ENCODE measurements at regions of chr19 and their contacts with region 1.

Region 1: GRCh38 chr19:6021878-6022569 is 44.1 kb upstream of the RANBP3 start:
- DNase-seq: peak; percentile 93
- ATAC-seq: peak; percentile 89
- H3K4me3 Mint-ChIP-seq: no peak overlapping the region
- H3K27ac Mint-ChIP-seq: no peak overlapping the region
- H3K4me1 Mint-ChIP-seq: 0 out of 2 replicates have a peak, but pooled peaks cover 6% of the 10 kb centered on the region
- H3K27me3 Mint-ChIP-seq: peaks cover 12% of the 10 kb centered on the region
- CTCF ChIP-seq: peak; percentile 80

Region 2: DNA sequence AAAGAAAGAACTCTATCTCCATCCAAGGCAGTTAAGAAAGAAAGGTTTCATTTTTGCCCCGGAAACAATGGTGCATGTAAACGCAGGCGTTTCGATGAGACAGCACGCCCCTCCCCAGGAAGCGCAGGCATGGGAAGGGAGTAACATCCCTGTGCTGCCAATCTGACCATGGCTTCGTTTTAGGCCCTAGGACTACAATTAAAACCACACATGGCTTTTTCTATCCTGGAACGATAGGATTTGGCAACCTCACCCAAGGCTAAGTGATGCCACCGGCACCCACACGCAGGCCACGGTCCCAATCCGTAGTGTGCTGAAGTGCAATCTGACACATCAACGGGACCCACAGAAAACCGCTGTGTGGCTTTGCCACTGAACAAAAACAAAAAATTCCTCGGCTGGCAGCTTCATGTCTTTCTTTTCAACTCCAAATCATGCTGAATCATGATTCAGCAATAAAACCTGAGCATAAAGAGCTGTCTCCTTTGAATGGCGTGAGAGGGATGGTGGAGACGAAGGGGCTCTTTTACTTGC is 68.3 kb before region 1 on chr19:
- CTCF ChIA-PET with region 1: interaction called, 22 read pairs
- POLR2A ChIA-PET with region 1: no interaction called
- DNase-seq: no peak
- ATAC-seq: no peak
- H3K4me3 Mint-ChIP-seq: peak overlapping the region; percentile 22; the same call in 1 of the 2 replicates
- H3K27ac Mint-ChIP-seq: peak overlapping the region; percentile 88
- H3K4me1 Mint-ChIP-seq: peaks cover 95% of the 10 kb centered on the region
- H3K27me3 Mint-ChIP-seq: no peaks in the 10 kb centered on the region; the same call in 1 of the 2 replicates
- CTCF ChIP-seq: no peak

Region 3: DNA sequence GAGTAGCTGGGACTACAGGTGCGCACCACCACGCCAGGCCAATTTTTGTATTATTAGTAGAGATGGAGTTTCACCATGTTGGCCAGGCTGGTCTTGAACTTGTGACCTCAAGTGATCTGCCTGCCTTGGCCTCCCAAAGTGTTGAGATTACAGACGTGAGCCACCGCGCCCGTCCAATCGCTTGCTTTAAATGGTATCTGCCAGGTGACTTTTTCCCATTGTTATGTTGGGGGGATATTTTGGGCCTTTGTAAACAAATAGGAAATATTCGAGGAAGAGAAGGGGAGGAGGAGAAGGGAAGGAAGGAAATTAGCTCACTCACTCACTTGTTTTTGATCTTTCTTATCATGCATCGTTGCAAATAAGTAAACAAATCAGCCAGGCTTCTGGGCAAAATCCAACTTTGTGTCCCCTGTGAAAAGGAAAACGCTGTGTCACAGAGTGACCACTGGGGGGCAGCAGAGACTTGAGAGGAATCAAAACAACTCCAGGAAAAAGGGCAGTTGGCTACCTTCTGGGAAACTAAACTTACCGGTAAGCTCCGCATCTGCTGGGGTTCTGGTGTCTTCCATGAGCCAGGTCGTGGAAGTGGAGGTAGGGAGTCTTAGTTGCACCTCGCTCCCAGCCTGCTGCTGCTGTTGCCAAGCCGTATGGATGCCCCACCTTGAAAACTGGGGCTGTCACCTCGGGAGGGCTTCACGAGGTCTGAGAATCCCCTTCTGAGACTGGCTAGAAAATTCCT is 34.8 kb before region 1 on chr19:
- CTCF ChIA-PET with region 1: interaction called, 245 read pairs
- POLR2A ChIA-PET with region 1: no interaction called
- DNase-seq: peak; percentile 84
- ATAC-seq: peak; percentile 46
- H3K4me3 Mint-ChIP-seq: no peak overlapping the region
- H3K27ac Mint-ChIP-seq: peak overlapping the region; percentile 46; the same call in 1 of the 2 replicates
- H3K4me1 Mint-ChIP-seq: peaks cover 12% of the 10 kb centered on the region
- H3K27me3 Mint-ChIP-seq: peaks cover 4% of the 10 kb centered on the region
- CTCF ChIP-seq: peak; percentile 90

Region 4: GRCh38 chr19:6034512-6034911 is 12.5 kb after region 1 on chr19:
- CTCF ChIA-PET with region 1: interaction called, 21 read pairs
- POLR2A ChIA-PET with region 1: no interaction called
- DNase-seq: no peak
- ATAC-seq: no peak
- H3K4me3 Mint-ChIP-seq: no peak overlapping the region
- H3K27ac Mint-ChIP-seq: no peak overlapping the region
- H3K4me1 Mint-ChIP-seq: no peaks in the 10 kb centered on the region
- H3K27me3 Mint-ChIP-seq: peaks cover 3% of the 10 kb centered on the region
- CTCF ChIP-seq: no peak

Region 5: DNA sequence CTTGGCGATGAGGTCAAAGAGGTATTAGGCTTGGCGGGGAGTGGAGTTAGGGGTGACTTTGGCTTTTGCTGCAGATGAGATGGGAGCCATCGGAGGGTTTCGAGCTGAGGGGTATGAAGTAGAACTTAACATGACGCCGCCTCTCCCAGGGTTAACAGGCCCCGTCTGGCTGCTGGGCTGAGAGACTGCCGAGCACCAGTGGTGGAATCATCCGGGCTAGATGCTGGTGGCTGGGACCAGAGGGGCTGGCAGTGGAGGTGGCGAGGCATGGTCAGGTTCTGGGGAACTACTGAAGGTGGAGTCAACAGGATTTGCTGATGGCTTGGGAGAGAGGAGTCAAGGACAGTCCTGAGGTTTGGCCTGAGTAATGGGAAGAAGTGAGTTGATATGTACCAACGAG is 83.4 kb after region 1 on chr19:
- CTCF ChIA-PET with region 1: no interaction called
- POLR2A ChIA-PET with region 1: no interaction called
- DNase-seq: no peak
- ATAC-seq: no peak
- H3K4me3 Mint-ChIP-seq: no peak overlapping the region
- H3K27ac Mint-ChIP-seq: no peak overlapping the region
- H3K4me1 Mint-ChIP-seq: peaks cover 18% of the 10 kb centered on the region
- H3K27me3 Mint-ChIP-seq: peaks cover 46% of the 10 kb centered on the region
- CTCF ChIP-seq: no peak

Region 6: DNA sequence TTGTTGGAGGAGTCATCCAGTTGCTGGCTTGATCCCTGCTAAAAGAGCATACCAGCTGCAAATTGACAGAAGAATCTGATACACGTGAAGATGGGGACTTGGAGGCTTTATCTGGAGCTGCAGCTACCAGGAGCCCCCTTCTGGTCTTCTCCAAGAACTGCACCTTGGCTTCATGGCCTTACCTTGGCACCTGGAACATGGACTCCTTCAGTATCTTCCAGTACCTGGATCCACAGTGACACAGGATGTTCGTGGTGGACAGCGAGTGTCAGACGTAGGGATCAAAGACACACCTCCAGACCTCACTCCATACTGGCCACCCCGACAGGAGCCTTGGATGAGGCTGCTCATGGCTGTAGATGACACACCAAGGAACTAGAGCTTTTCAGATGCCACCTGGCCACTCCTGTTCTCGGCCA is 103.6 kb after region 1 on chr19:
- CTCF ChIA-PET with region 1: interaction called, 16 read pairs
- POLR2A ChIA-PET with region 1: no interaction called
- DNase-seq: peak; percentile 63
- ATAC-seq: peak; percentile 81
- H3K4me3 Mint-ChIP-seq: no peak overlapping the region
- H3K27ac Mint-ChIP-seq: no peak overlapping the region
- H3K4me1 Mint-ChIP-seq: no peaks in the 10 kb centered on the region
- H3K27me3 Mint-ChIP-seq: no peaks in the 10 kb centered on the region
- CTCF ChIP-seq: peak; percentile 89

Measured in WTC11 (cell line).